GM18951 (cell line): ENCODE measurements at regions of chr7 and their contacts with region 1.

Region 1: DNA sequence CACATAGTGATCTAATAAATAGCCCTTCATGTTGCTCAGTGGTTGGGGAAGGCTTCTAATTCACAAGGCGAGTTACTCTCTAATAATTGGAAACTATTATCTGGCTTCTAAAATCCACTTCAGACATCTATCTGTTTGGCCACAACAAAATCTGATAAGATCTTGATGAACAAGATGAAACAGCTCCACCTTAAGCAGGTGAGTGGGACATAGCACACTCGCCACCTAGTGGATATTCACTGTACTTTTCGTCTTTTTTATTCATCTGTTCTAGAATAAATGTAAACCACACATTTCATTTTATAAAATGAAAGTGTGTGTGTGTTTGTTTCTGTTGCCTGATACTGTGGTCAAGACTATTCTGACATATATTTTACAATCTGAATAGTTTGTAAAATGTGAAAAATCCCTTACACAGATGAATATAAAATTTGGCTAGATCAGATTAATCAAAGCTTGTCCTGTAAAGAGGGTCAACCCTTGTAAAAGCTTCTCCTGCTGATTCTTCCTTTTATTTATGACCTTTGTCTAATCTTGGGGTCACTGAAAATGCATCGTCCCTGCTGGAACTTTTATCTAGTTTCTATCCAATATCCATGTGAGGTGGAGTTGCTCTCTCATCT is 26.5 kb upstream of the CNTNAP2 start:
- POLR2A ChIP-seq: no peak

Region 2: GRCh38 chr7:145036604-145037405 is 1053.3 kb before region 1 on chr7:
- in situ Hi-C with region 1: loop called (anchors 25 kb)
- POLR2A ChIP-seq: no peak

Region 3: GRCh38 chr7:145169942-145170341 is 920.2 kb before region 1 on chr7:
- in situ Hi-C with region 1: loop called (anchors 25 kb)
- POLR2A ChIP-seq: no peak

Region 4: GRCh38 chr7:146805082-146805481 is 714.9 kb after region 1 on chr7:
- in situ Hi-C with region 1: no loop called
- POLR2A ChIP-seq: no peak